ENCODE measurements at regions of chr18 and their contacts with region 1.

Region 1: DNA sequence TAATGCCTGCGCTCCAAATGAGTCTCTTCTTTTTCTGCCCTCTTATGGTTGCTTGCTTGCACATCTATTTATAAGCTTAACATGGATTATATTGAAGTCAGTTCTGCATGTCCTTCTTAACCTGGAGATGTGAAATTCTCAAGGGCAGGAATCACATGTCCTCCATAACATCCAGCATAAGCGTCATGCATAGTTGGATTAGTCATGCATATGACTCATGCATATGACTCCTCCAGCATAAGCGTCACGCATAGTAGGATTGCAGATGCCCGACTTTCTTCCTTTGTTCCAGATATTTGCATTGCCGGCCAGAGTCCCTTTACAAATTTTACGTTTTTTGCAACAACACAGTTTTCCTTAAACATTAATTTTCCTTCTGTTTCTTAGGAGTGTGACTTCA is 308.6 kb downstream of the TGIF1 start:
- DNase-seq: peak; percentile 28
- H3K4me3 Mint-ChIP-seq: no peak overlapping the region
- H3K27ac Mint-ChIP-seq: peak overlapping the region; percentile 9
- H3K4me1 Mint-ChIP-seq: peaks cover 16% of the 10 kb centered on the region
- H3K27me3 Mint-ChIP-seq: no peaks in the 10 kb centered on the region
- CTCF ChIP-seq: no peak

Region 2: DNA sequence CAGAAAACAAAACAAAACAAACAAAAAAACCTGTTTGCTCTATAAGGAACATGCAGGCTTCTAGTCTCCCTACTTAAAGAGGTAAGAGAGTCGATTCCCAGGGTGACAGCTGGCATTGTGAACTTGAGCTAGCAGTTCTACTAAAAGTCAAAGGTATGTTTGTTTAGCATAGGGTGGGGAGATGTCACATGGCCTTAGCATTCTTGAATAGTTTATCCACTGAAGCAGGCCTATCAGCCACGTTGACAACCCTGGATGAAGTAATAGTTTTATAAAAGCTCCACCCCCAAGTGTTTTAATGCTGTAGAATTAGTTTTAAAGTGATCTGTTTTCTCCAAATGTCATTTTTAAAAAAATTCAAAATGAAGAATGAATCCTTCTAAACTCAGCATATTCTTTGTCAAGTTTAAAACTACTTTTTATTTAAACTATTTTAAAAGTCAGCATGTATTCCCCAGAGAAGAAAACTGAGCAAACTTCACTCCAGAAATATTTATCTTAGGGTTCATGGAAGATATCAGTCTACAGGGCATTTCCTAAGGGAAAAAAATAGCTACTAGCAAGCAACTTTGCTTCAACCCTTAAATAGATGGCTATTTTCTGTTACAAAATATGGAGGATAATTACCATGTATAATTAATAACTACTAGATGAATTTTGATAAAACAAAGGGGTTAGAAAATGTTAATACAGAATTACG is 540.4 kb before region 1 on chr18:
- CTCF ChIA-PET with region 1: no interaction called
- intact Hi-C with region 1: no loop called
- DNase-seq: peak; percentile 54
- H3K4me3 Mint-ChIP-seq: peak overlapping the region; percentile 4
- H3K27ac Mint-ChIP-seq: peak overlapping the region; percentile 97
- H3K4me1 Mint-ChIP-seq: peaks cover 35% of the 10 kb centered on the region
- H3K27me3 Mint-ChIP-seq: no peaks in the 10 kb centered on the region
- CTCF ChIP-seq: no peak

Region 3: GRCh38 chr18:3675446-3675845 is 83.1 kb before region 1 on chr18:
- CTCF ChIA-PET with region 1: no interaction called
- intact Hi-C with region 1: no loop called
- DNase-seq: peak; percentile 69
- H3K4me3 Mint-ChIP-seq: no peak overlapping the region
- H3K27ac Mint-ChIP-seq: peak overlapping the region; percentile 68
- H3K4me1 Mint-ChIP-seq: peaks cover 47% of the 10 kb centered on the region
- H3K27me3 Mint-ChIP-seq: no peaks in the 10 kb centered on the region
- CTCF ChIP-seq: no peak

Region 4: GRCh38 chr18:3722320-3723000 is 36.1 kb before region 1 on chr18:
- CTCF ChIA-PET with region 1: no interaction called
- intact Hi-C with region 1: loop called (anchors 5 kb)
- DNase-seq: no peak
- H3K4me3 Mint-ChIP-seq: peak overlapping the region; percentile 44
- H3K27ac Mint-ChIP-seq: peak overlapping the region; percentile 64
- H3K4me1 Mint-ChIP-seq: peaks cover 48% of the 10 kb centered on the region
- H3K27me3 Mint-ChIP-seq: no peaks in the 10 kb centered on the region
- CTCF ChIP-seq: no peak

Region 5: GRCh38 chr18:3914833-3915610 is 156.5 kb after region 1 on chr18:
- CTCF ChIA-PET with region 1: no interaction called
- intact Hi-C with region 1: no loop called
- DNase-seq: no peak
- H3K4me3 Mint-ChIP-seq: no peak overlapping the region
- H3K27ac Mint-ChIP-seq: no peak overlapping the region
- H3K4me1 Mint-ChIP-seq: no peaks in the 10 kb centered on the region
- H3K27me3 Mint-ChIP-seq: no peaks in the 10 kb centered on the region
- CTCF ChIP-seq: no peak